GM12878 (cell line): ENCODE measurements at regions of chr12 and their contacts with region 1.

Region 1: GRCh38 chr12:83960767-83961166 is 951.8 kb downstream of the SLC6A15 start:
- DNase-seq: no peak
- ATAC-seq: no peak
- H3K4me3 ChIP-seq: no peak overlapping the region
- H3K27ac ChIP-seq: no peak overlapping the region
- H3K4me1 ChIP-seq: no peaks in the 10 kb centered on the region
- H3K27me3 ChIP-seq: no peaks in the 10 kb centered on the region
- CTCF ChIP-seq: no peak
- EP300 ChIP-seq: no peak
- POLR2A ChIP-seq: no peak
- RAD21 ChIP-seq: no peak

Region 2: GRCh38 chr12:83945871-83946270 is 14.9 kb before region 1 on chr12:
- CTCF ChIA-PET with region 1: interaction called, 9 read pairs
- POLR2A ChIA-PET with region 1: no interaction called
- RAD21 ChIA-PET with region 1: interaction called, 5 read pairs
- SMC1A ChIA-PET with region 1: interaction called, 10 read pairs
- in situ Hi-C with region 1: no loop called
- intact Hi-C with region 1: no loop called
- DNase-seq: no peak
- ATAC-seq: peak; percentile 62
- H3K4me3 ChIP-seq: no peak overlapping the region
- H3K27ac ChIP-seq: no peak overlapping the region
- H3K4me1 ChIP-seq: no peaks in the 10 kb centered on the region
- H3K27me3 ChIP-seq: no peaks in the 10 kb centered on the region
- CTCF ChIP-seq: no peak
- EP300 ChIP-seq: no peak
- POLR2A ChIP-seq: no peak
- RAD21 ChIP-seq: no peak